ENCODE measurements at regions of chr7 and their contacts with region 1.

Region 1: DNA sequence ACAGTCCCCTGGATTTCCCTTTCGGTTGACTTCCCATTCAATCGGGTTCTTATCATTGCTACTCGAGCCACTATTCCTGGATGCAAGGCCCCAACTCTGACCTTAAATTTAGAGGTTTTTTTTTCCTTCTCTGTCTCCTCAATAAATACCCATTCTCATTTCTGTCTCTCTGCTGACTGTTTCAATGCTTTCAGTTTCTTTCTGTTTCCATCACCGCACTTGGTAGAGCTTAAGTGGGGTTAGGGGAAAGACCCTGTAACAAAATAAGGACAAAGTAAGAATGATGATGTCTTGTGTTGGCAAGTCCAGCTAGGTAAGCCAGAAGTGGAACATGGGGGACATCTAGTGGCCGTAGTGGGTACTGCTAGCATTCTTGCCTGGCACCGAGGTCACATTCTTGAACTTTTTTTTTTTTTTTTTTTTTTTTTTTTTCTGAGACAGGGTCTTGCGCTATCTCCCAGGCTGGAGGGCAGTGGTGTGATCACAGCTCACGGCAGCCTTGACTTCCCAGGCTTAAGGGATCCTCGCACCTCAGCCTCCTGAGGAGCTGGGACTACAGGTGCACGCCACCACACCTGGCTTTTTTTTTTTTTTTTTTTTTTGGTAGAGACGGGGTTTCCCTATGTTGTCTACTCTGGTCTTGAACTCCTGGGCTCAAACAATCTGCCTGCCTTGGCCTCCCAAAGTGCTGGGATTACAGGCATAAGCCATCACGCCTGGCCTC is 40.3 kb downstream of the ZC3HC1 start:
- DNase-seq: peak; percentile 83 to 94
- H3K4me3 ChIP-seq: peak overlapping the region; percentile 29; the same call in 1 of the 2 replicates
- H3K27ac ChIP-seq: peak overlapping the region; percentile 99
- H3K4me1 ChIP-seq: peaks cover 26% of the 10 kb centered on the region
- H3K27me3 ChIP-seq: no peaks in the 10 kb centered on the region
- CTCF ChIP-seq: peak; percentile 97

Region 2: GRCh38 chr7:129218514-129219062 is 792.3 kb before region 1 on chr7:
- CTCF ChIA-PET with region 1: interaction called, 5 read pairs
- POLR2A ChIA-PET with region 1: no interaction called
- intact Hi-C with region 1: loop called (anchors 1 kb)
- DNase-seq: peak; percentile 59 to 82
- H3K4me3 ChIP-seq: no peak overlapping the region
- H3K27ac ChIP-seq: no peak overlapping the region
- H3K4me1 ChIP-seq: peaks cover 4% of the 10 kb centered on the region
- H3K27me3 ChIP-seq: no peaks in the 10 kb centered on the region
- CTCF ChIP-seq: peak; percentile 93

Region 3: GRCh38 chr7:129611246-129612111 is 399.4 kb before region 1 on chr7 and contains the start of gene NRF1:
- CTCF ChIA-PET with region 1: no interaction called
- POLR2A ChIA-PET with region 1: no interaction called
- intact Hi-C with region 1: loop called (anchors 1 kb)
- DNase-seq: peak; percentile 67 to 94
- H3K4me3 ChIP-seq: peak within 1 kb of the TSS; percentile 96
- H3K27ac ChIP-seq: peak within 1 kb of the TSS; percentile 75
- H3K4me1 ChIP-seq: peaks cover 29% of the 10 kb centered on the region
- H3K27me3 ChIP-seq: no peaks in the 10 kb centered on the region
- CTCF ChIP-seq: no peak
- total RNA-seq, gene NRF1: 20.5 and 23.2 TPM in 2 replicates

Region 4: GRCh38 chr7:129831424-129832112 is 179.3 kb before region 1 on chr7:
- CTCF ChIA-PET with region 1: interaction called, 5 read pairs
- POLR2A ChIA-PET with region 1: interaction called, 7 read pairs
- intact Hi-C with region 1: loop called (anchors 1 kb)
- DNase-seq: peak; percentile 59 to 87
- H3K4me3 ChIP-seq: no peak overlapping the region
- H3K27ac ChIP-seq: peak overlapping the region; percentile 90
- H3K4me1 ChIP-seq: peaks cover 28% of the 10 kb centered on the region
- H3K27me3 ChIP-seq: no peaks in the 10 kb centered on the region
- CTCF ChIP-seq: no peak

Region 5: GRCh38 chr7:129958643-129959470 is 52.0 kb before region 1 on chr7:
- CTCF ChIA-PET with region 1: interaction called, 6 read pairs
- POLR2A ChIA-PET with region 1: interaction called, 38 read pairs
- intact Hi-C with region 1: loop called (anchors 1 kb)
- DNase-seq: peak; percentile 96 to 99
- H3K4me3 ChIP-seq: peak overlapping the region; percentile 32; the same call in 1 of the 2 replicates
- H3K27ac ChIP-seq: peak overlapping the region; percentile 99
- H3K4me1 ChIP-seq: peaks cover 47% of the 10 kb centered on the region
- H3K27me3 ChIP-seq: no peaks in the 10 kb centered on the region
- CTCF ChIP-seq: no peak

Region 6: DNA sequence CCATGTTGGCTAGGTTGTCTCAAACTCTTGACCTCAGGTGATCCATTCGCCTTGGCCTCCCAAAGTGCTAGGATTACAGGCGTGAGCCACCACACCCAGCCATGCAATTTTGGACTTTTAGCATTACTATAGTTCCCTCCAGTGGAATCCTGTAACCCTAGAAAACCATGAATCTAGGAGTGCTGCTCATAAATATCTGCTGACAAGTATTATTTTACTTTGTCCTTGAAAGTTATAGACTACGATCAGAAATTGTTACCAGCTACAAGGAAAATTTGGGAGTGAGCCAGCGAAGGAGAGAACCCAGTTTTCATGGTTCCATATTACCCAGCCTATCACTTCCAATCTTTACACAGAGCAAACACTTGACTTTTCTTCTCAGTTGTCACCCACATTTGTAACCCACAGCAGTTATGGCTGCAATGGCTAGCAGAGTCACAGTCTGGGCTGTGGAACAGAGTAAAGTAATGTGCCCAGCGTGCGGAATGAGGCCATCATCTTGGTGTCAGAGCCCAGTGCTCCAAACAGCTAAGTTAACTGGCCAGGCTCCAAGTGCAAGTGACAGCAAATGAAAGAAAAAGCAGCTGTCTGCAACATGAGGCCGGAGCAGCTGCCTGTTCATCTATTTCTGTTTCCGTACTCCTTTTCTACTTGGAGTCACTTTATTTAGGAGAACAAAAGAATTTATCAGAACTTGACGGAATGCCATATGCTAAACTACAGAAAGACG is 10.4 kb after region 1 on chr7:
- CTCF ChIA-PET with region 1: no interaction called
- POLR2A ChIA-PET with region 1: no interaction called
- intact Hi-C with region 1: loop called (anchors 1 kb)
- DNase-seq: no peak
- H3K4me3 ChIP-seq: no peak overlapping the region
- H3K27ac ChIP-seq: no peak overlapping the region
- H3K4me1 ChIP-seq: peaks cover 13% of the 10 kb centered on the region
- H3K27me3 ChIP-seq: no peaks in the 10 kb centered on the region
- CTCF ChIP-seq: no peak

Region 7: DNA sequence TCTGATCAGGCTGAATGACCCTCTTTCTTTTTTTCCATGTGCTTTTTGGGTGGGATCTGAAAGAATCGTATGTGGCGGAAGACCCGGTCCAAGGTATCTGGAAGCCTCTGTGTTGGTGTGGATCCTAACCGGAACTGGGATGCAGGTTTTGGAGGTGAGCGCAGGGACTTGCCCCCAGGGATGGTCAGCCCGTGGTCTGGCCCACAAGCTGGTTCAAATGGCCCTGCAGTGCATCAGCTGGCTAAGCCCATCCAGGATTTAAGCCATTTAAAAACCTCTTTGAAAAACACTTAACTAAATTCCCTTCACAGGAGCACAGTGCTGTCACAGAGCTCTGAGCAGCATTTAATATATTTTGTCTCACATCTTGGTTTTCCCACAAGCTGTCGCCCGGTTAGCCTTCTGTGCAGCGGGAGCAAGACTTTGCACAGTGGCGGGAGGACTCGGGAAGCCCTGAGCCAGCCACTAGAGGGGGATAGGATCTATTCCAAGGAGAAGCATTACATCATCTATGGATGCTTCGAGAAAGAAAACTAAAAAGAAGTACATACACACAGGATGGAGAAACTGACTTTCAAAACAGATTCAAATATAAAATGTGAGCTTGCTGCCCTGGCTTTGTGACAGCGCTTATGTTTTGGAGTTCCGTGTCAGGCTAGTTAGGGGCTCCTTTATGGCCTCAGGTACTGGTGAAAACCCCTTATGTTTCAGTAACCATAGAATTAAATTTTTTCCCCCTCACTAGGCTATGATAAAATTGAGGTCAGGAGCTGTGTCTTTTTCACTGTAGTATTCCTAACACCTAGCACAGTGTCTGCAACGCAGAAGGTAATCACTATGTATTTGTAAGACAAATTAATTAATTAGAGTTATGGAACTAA is 267.2 kb after region 1 on chr7:
- CTCF ChIA-PET with region 1: no interaction called
- POLR2A ChIA-PET with region 1: no interaction called
- intact Hi-C with region 1: no loop called
- DNase-seq: no peak
- H3K4me3 ChIP-seq: no peak overlapping the region
- H3K27ac ChIP-seq: no peak overlapping the region
- H3K4me1 ChIP-seq: peaks cover 56% of the 10 kb centered on the region
- H3K27me3 ChIP-seq: no peaks in the 10 kb centered on the region
- CTCF ChIP-seq: peak; percentile 27; the same call in 1 of the 2 replicates

Measured in PC-9 (cell line).